ENCODE measurements at regions of chr9 and their contacts with region 1.

Region 1: GRCh38 chr9:21317956-21318923 is 13.1 kb upstream of the IFNA5 start:
- DNase-seq: no peak
- H3K4me3 Mint-ChIP-seq: no peak overlapping the region
- H3K27ac Mint-ChIP-seq: no peak overlapping the region
- H3K4me1 Mint-ChIP-seq: peaks cover 4% of the 10 kb centered on the region
- H3K27me3 Mint-ChIP-seq: peaks cover 11% of the 10 kb centered on the region

Region 2: DNA sequence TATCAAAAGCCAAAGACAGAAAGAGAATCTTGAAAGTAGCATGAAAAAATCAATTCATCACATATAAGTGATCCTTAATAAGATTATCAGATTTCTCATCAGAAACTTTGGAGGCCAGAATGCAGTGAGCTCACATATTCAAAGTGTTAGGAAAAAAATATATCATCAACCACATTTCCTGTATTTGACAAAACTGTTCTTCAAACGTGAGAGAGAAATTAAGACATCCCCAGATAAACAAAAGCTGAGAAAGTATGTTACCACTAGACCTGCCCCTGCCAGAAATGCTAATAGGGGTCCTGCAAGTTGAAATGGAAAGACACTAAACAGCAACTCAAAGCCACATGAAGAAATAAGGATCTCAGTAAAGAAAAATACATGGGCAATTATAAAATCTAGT is 316.7 kb before region 1 on chr9:
- intact Hi-C with region 1: no loop called
- DNase-seq: no peak
- H3K4me3 Mint-ChIP-seq: no peak overlapping the region
- H3K27ac Mint-ChIP-seq: no peak overlapping the region
- H3K4me1 Mint-ChIP-seq: peaks cover 32% of the 10 kb centered on the region
- H3K27me3 Mint-ChIP-seq: no peaks in the 10 kb centered on the region

Region 3: GRCh38 chr9:21210311-21210710 is 107.9 kb before region 1 on chr9:
- intact Hi-C with region 1: loop called (anchors 10 kb)
- DNase-seq: no peak
- H3K4me3 Mint-ChIP-seq: no peak overlapping the region
- H3K27ac Mint-ChIP-seq: no peak overlapping the region
- H3K4me1 Mint-ChIP-seq: peaks cover 8% of the 10 kb centered on the region
- H3K27me3 Mint-ChIP-seq: peaks cover 14% of the 10 kb centered on the region

Region 4: DNA sequence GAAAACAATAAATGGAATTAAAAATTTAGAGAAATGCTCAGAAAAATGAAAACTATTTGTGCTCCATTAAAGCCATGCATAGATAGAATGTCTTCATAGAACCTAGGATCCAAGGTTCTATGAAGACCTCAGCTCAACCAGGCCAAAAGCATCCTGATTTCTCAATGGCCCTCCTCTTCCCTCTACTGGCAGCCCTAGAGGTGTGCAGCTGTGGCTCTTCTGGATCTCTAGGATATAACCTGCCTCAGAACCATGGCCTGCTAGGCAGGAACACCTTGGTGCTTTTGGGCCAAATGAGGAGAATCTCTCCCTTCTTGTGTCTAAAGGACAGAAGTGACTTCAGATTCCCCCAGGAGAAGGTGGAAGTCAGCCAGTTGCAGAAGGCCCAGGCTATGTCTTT is 137.1 kb after region 1 on chr9:
- intact Hi-C with region 1: loop called (anchors 1 kb)
- DNase-seq: no peak
- H3K4me3 Mint-ChIP-seq: no peak overlapping the region
- H3K27ac Mint-ChIP-seq: no peak overlapping the region
- H3K4me1 Mint-ChIP-seq: no peaks in the 10 kb centered on the region
- H3K27me3 Mint-ChIP-seq: peaks cover 29% of the 10 kb centered on the region